ENCODE measurements at regions of chr9 and their contacts with region 1.

Region 1: DNA sequence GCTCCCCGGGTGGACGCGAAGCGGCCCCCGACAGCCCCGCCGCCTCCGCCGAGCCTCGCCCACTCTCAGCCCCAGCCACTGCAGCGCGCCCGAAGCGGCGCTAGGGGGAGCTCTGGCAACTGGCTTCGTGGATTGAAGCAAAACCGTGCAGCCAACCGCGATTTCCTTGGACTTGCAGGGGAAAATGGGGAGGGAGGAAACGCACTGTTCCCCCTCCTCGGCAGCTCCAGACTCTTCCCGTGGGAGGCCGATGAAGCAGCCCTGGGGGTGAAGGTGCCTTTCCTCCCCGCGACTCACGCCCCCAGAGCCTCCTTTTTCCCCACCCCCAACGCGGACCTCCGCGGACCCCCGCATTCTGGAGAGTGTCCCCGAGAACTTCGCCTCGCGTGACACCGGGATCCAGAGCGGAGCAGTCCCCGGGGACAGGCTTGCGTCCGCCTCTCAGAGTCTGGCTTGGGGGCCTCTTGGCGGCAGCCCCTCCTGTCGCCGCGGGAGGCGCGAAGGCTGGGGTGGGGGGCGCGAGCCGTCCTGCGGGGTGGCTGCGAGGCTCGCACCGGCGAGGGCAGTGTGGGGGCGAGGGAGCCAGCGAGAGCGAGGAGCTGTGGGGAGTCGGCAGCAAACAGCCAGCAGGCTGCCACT is 3.9 kb downstream of the IER5L start:
- DNase-seq: peak; percentile 74 to 82 (median 80)
- H3K4me3 ChIP-seq: peak overlapping the region; percentile 61 to 89 (median 78)
- H3K27ac ChIP-seq: peak overlapping the region in 1 of 2 experiments; percentile 81
- H3K4me1 ChIP-seq: peaks cover 2 to 61% (median 45%) of the 10 kb centered on the region in 4 experiments
- H3K27me3 ChIP-seq: no peaks in the 10 kb centered on the region

Region 2: GRCh38 chr9:129154866-129155477 is 19.2 kb before region 1 on chr9:
- CTCF ChIA-PET with region 1: interaction called, 13 read pairs
- POLR2A ChIA-PET with region 1: no interaction called
- DNase-seq: no peak
- H3K4me3 ChIP-seq: no peak overlapping the region
- H3K27ac ChIP-seq: no peak overlapping the region
- H3K4me1 ChIP-seq: no peaks in the 10 kb centered on the region
- H3K27me3 ChIP-seq: no peaks in the 10 kb centered on the region

Region 3: DNA sequence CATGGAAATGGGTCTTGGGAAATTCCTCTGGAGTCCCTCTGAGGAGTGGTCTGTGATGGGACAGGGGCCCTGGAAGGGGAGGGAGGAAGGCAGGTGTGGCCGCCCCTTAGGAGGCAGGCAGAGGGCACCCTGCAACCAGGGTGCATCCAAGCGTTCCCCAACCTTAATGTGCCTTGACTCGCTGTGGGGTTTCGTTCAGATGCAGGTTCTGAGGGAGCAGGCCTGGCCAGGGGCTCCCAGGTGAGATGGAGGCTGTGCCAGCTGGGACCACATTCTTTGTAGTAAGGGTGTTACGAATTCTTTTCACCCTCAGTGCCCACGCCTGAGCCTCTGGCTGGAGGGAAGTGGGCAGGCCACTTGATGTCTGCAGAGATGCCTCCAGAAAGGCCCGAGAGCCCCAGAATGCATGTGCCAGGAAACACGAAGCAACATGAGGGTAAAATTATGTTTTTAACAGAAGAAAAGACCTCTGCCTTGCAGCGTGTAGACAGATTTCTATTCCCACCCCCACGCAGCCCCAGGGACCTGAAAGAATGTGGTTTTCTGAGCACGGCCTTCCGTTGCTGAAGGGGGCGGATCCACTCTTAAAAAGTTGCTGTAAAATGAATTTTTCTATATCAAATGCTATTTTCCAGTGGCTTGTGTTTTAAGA is 154.3 kb after region 1 on chr9:
- CTCF ChIA-PET with region 1: no interaction called
- POLR2A ChIA-PET with region 1: no interaction called
- DNase-seq: peak in 1 of 3 donors; percentile 53
- H3K4me3 ChIP-seq: no peak overlapping the region
- H3K27ac ChIP-seq: no peak overlapping the region
- H3K4me1 ChIP-seq: peaks cover 0 to 17% (median 16%) of the 10 kb centered on the region in 4 experiments
- H3K27me3 ChIP-seq: no peaks in the 10 kb centered on the region